Endothelial cell of umbilical vein (primary cell): ENCODE measurements at regions of chr4 and their contacts with region 1.

Region 1: DNA sequence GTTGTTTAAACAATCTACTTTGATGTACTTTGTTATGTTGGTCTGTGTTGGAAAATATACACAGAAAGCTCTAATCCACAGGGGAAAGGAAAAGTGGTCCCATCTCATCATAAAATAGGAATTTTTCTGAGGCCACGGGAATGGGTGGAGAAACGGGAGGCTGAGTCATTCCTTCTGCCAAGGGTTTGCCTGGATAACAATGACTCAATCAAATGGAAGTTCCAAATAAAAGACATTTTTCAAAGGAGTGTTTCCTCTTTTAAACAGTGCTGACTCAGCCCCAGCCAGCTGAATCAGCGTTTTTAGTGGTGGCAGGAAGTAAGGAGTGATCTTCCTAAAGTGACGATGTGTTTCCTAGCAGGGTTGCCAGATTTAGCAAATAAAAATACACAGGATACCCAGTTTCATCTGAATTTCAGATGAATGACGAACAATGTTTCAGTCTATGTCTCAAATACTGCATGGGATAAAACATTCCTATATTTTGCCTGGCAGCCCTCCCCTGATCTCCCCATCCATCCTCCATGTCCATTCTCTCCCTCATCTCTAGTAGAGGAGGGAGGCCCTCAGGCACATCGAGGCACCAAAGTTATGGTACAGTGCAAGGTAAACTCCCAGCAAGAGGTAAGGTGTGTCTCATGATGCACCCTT is 345.4 kb upstream of the GATB start:
- DNase-seq: peak; percentile 96
- H3K4me3 ChIP-seq: no peak overlapping the region
- H3K27ac ChIP-seq: peak overlapping the region; percentile 82
- H3K4me1 ChIP-seq: peaks cover 16% of the 10 kb centered on the region
- H3K27me3 ChIP-seq: no peaks in the 10 kb centered on the region
- CTCF ChIP-seq: no peak
- POLR2A ChIP-seq: no peak

Region 2: DNA sequence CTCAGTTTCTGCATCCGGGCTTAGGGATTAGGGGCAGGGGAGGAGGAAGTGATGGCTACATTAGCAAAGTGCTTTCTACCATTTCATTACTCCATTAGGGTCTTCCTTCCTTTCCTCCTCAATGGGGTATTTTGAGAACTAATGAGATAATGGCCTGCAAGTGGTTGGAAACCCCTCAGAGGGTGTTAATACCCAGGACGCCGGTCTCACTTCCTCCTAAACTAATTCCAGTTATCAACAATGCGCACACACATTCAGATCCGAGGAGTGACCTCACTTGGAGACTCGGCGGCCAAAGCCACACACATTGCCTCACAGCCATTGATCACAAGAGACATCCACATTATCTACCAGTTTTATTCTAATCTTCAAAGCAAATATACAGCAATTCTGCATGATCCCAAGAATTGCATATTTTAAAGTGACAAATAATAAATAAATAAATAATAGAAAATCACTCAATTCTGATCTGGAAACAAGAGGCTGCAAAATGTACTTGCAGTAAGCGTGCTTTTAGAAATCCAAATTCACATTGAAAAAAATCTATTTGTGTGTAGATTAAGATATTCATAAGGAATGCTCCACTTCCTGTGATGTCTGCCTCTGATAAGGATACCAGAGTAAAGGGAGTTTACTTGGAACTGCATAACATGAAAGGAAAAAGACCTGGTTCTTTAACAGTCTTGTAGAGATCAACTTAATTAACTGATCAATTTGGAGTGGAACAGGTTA is 100.6 kb after region 1 on chr4:
- CTCF ChIA-PET with region 1: no interaction called
- POLR2A ChIA-PET with region 1: interaction called, 3 read pairs
- dilution Hi-C with region 1: no loop called
- intact Hi-C with region 1: loop called (anchors 2 kb)
- DNase-seq: peak; percentile 65
- H3K4me3 ChIP-seq: no peak overlapping the region
- H3K27ac ChIP-seq: peak overlapping the region; percentile 32
- H3K4me1 ChIP-seq: peaks cover 22% of the 10 kb centered on the region
- H3K27me3 ChIP-seq: no peaks in the 10 kb centered on the region
- CTCF ChIP-seq: no peak
- POLR2A ChIP-seq: no peak

Region 3: GRCh38 chr4:152243896-152244595 is 137.8 kb after region 1 on chr4:
- CTCF ChIA-PET with region 1: no interaction called
- POLR2A ChIA-PET with region 1: no interaction called
- dilution Hi-C with region 1: no loop called
- intact Hi-C with region 1: loop called (anchors 1 kb)
- DNase-seq: peak; percentile 98
- H3K4me3 ChIP-seq: no peak overlapping the region
- H3K27ac ChIP-seq: peak overlapping the region; percentile 78
- H3K4me1 ChIP-seq: peaks cover 27% of the 10 kb centered on the region
- H3K27me3 ChIP-seq: no peaks in the 10 kb centered on the region
- CTCF ChIP-seq: no peak
- POLR2A ChIP-seq: no peak

Region 4: GRCh38 chr4:152352622-152353116 is 246.4 kb after region 1 on chr4:
- CTCF ChIA-PET with region 1: no interaction called
- POLR2A ChIA-PET with region 1: no interaction called
- dilution Hi-C with region 1: no loop called
- intact Hi-C with region 1: loop called (anchors 5 kb)
- DNase-seq: peak; percentile 94
- H3K4me3 ChIP-seq: peak overlapping the region; percentile 26 to 69 (median 28)
- H3K27ac ChIP-seq: peak overlapping the region; percentile 30
- H3K4me1 ChIP-seq: peaks cover 3% of the 10 kb centered on the region
- H3K27me3 ChIP-seq: no peaks in the 10 kb centered on the region
- CTCF ChIP-seq: no peak
- POLR2A ChIP-seq: peak; percentile 54